GM10248 (cell line): ENCODE measurements at regions of chr2 and their contacts with region 1.

Region 1: GRCh38 chr2:24075915-24076848 is at the start of gene SF3B6:
- DNase-seq: peak; percentile 95
- CTCF ChIP-seq: no peak

Region 2: DNA sequence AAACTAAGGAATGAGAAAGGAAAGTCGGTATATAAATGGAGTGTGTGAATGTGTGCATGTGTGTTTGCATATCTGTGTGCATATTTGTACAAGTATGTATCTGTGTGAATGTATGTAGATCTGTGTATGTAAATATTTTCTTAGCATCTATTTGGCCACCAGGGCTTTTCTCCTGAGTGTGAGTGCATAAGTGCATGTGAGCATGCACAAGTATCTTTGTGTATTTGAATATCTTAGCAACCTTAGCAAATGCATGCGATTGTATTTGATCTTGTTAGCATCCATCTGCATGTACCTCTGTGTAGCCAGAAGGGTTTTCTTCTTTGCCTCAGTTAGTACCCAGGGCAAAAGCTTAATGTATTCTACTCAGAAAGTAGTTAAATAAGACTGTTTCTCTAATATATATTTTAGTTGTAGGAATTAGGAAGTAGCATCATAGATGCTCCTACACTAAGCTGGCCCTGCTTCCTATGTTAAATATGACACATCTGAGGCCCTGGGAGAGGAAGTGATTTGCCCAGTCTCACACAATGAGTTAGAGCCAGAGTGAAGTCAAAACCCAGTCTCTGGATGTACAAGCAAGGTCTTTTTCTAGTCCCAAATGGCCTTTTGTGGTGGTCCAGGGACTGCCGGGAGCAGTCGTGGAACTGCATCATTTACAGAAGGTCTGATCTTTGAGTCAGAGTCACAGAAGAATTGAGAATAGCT is 17.5 kb before region 1 on chr2:
- CTCF ChIA-PET with region 1: interaction called, 91 read pairs
- POLR2A ChIA-PET with region 1: interaction called, 3 read pairs
- DNase-seq: no peak
- CTCF ChIP-seq: no peak

Region 3: DNA sequence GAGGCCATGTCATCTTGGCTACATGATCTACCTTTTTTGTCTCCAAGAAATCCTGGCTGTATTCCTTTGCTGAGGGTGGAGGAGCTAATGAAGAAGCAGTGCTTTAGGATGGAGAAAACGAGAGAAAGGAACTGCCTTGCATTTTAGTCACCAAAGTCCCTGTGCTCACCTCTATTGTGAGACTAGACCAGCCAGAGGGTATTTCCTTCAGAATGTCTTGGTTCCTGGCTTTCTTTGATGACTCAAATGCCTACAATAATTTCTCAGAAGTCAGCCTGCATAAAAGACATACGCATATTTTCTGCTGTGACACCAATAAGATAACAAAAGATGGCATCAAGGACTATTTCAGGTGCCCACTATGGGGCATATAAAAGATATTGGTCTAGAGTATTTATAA is 10.8 kb before region 1 on chr2:
- CTCF ChIA-PET with region 1: interaction called, 91 read pairs
- POLR2A ChIA-PET with region 1: interaction called, 3 read pairs
- DNase-seq: no peak
- CTCF ChIP-seq: no peak